ENCODE measurements at regions of chr1 and their contacts with region 1.

Region 1: DNA sequence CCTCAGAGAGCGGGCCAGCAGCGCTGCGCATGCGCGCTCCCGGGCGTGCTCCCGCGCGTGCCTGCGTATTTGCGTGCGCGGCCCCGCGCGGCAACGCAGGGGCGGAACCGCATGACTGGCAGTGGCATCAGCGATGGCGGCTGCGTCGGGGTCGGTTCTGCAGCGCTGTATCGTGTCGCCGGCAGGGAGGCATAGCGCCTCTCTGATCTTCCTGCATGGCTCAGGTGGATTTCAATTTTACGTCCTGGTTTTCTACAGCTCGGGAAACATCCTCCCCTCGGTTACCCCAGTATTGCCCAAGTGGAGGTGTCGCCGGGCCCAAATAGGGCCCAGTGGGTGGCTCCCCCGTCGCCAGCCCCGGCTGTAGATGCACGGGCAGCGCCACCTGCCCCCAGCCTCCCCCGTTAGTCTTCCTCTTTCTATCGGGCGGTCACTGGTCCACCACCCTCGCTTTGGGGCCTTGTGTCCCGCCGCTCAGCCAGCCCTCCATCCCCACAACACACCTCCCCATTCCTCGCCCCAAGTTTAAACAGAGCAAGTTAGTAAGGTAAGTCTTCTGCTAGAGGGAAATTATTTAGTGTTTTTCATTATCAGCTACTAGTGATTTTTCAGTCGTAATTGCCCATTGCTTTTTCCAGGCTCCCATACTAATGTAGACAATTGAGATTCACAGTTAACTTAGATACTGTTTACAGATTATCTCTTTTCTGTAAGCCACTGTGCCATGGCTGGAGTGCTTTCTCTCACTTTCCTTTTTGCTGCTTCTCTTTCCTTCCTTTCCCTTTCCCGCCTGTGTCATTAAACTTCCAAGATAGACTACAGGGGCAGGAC is at the start of gene LYPLAL1:
- DNase-seq: peak; percentile 98
- ATAC-seq: peak; percentile 75
- H3K4me3 ChIP-seq: peak within 1 kb of the TSS; percentile 69
- H3K27ac ChIP-seq: peak within 1 kb of the TSS; percentile 23
- H3K4me1 ChIP-seq: peaks cover 47% of the 10 kb centered on the region
- H3K27me3 ChIP-seq: no peaks in the 10 kb centered on the region
- CTCF ChIP-seq: peak; percentile 51; the same call in 1 of the 2 replicates
- total RNA-seq, gene LYPLAL1: 15.8 and 21.3 TPM in 2 replicates

Region 2: GRCh38 chr1:218686258-218686657 is 487.7 kb before region 1 on chr1:
- CTCF ChIA-PET with region 1: no interaction called
- POLR2A ChIA-PET with region 1: no interaction called
- intact Hi-C with region 1: loop called (anchors 5 kb)
- DNase-seq: peak; percentile 82
- ATAC-seq: peak; percentile 84
- H3K4me3 ChIP-seq: no peak overlapping the region
- H3K27ac ChIP-seq: no peak overlapping the region
- H3K4me1 ChIP-seq: peaks cover 7% of the 10 kb centered on the region; the same call in 1 of the 2 replicates
- H3K27me3 ChIP-seq: no peaks in the 10 kb centered on the region
- CTCF ChIP-seq: no peak